Activated CD8-positive, alpha-beta T cell treated with anti-CD3 and anti-CD28 coated beads, Interleukin-2, amount 10 ng/mL, durations not matched to agents 7 days and 5 days (primary cell): ENCODE measurements at regions of chr9 and their contacts with region 1.

Region 1: DNA sequence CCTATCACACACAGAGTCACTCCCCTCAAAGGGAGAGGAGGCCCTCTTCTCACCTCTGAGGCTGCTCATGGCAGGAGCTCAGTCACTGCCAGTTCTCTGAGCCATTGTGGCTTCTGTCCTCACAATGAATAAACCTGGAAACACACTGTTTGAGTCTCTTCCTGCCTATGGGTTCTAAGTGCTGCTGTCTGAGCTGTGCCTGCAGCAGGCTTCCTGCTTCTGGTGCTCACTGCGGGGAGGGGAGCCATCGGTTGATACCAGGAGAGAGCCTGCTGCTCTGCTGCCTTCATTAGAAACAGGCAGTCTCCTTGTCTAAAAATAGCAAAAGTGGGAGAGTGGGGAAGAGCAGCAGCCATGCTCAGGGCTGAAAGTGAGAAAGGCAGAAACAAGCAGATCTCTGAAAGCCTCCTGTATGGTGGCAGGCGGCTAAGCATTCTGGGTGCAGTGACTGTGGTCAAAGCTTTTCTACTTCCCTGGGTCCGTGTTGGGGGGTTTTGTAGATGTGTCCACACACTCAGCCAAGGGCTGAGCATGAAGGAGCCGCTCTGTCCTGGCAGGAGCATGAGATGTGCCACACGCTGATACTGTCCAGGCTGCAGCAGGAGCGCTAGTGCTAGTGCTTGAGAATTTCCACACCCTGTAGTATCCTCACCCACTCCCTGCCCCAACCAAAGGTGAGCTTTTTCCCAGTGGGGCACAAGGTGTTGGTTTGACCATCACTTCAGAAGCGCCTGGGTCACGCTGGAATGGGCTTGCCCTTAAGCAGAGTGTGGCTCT is 34.2 kb downstream of the PRKACG start:
- DNase-seq: peak; percentile 41
- ATAC-seq: peak; percentile 85
- H3K4me3 Mint-ChIP-seq: no peak overlapping the region
- H3K27ac Mint-ChIP-seq: peak overlapping the region; percentile 54
- H3K4me1 Mint-ChIP-seq: peaks cover 31% of the 10 kb centered on the region
- H3K27me3 Mint-ChIP-seq: no peaks in the 10 kb centered on the region

Region 2: DNA sequence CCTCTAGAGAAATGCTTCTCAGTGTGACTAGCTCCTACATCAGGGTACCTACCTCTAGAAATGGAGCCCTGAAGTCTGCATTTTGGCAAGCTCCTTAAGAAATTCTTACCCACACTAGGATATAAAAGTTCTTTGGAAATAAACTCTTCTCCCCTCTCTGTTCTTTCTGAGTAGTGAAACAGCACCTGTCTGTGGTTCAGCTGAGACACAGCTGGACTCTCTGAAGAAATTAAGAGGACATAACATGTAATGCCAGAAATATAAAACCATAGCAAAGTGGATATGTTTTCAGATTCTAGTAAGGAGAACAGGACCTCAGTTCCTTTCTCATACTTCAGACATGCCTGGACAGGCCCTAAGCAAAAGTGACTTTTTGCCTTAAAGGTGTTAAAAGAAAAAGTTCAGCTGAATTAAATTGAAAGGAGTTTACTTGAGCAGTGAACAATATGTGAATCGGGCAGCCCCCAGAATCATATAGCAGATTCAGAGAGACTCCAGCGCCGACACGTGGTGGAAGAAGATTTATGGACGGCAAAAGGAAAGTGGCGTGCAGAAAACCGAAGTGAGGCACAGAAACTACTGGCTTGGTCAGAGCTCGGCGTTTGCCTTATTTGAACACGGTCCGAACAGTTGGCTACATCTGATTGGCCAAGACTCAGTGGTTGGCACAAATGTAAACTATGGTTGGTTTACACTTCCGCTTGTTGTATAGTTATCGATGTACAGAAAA is 30.3 kb before region 1 on chr9:
- CTCF ChIA-PET with region 1: interaction called, 14 read pairs
- POLR2A ChIA-PET with region 1: no interaction called
- DNase-seq: peak; percentile 33
- ATAC-seq: no peak
- H3K4me3 Mint-ChIP-seq: no peak overlapping the region
- H3K27ac Mint-ChIP-seq: no peak overlapping the region
- H3K4me1 Mint-ChIP-seq: peaks cover 2% of the 10 kb centered on the region
- H3K27me3 Mint-ChIP-seq: peaks cover 10% of the 10 kb centered on the region